ENCODE measurements at regions of chr3 and their contacts with region 1.

Region 1: DNA sequence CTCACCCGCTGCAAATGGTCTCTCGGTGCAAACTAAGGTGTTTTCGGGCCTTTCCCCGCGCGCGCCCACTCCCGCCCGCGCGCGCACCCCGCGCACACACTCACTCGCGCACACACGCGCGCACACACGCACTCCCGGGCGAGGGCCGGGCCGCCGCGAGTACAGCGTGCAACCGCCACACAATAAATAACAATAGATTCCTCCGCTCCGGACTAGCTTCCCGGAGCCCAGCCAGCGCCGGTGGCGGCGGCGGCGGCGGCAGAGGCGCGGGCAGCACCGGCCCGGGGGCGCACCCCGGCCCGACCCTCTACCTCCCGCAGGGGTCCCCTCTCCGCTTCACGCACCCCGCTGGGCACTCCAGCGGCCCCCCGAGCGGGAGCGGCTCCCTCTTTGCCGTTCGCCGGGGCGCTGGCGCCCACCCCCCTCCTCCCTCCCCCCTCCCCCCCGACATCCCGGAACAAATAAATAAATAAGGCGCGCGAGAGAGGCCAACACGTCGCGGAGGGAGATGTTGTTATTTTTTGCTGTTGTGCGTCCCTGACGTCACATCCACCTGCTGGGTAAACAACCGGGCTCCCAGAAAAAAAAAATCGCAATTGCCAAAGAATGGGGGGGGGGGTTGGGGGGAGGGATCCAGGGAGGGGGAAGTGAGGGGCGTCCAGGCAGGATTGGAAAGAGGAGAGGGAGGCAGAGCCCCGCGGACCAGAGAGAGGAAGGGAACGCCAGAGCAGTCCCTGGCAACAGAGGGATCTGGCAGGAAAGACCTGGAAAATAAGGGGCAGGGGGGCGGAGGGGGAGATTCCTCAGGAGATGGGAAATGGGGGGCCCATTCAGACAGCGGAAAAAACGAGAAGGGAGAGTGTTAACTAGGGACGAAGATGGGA is at the start of gene FOXP1:
- DNase-seq: peak; percentile 56 to 96 (median 72)

Region 2: DNA sequence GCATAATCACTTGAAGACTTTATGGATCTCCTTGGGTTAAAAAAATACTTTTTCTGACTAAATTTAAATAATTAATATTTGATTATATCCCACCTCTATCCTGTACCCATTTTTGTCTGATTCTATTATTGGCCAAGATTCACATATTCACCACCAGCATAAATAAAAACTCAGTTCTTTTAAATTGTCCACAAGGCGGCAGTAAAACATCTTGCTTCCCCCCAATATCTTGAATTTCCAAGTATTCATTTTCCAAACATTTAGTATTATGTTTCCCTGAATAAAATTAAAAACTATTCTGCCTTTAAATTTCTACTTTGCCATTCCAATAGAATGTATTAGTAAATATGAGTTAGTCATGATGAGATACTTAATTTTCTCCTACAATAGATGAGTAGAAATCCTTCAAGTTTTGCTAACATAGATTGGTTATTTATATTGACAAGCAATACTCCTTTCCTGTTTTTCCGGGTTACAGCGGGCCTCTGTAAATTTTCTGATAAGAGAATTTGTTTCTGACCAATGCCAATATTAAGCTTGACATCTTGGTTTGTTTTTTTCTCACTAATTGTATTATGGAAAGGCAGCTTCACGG is 1052.6 kb before region 1 on chr3:
- intact Hi-C with region 1: loop called (anchors 5 kb)
- DNase-seq: no peak

Region 3: GRCh38 chr3:71064288-71064955 is 519.4 kb before region 1 on chr3:
- intact Hi-C with region 1: loop called (anchors 5 kb)
- DNase-seq: peak in 5 of 10 donors; percentile 28 to 83 (median 66)

Region 4: DNA sequence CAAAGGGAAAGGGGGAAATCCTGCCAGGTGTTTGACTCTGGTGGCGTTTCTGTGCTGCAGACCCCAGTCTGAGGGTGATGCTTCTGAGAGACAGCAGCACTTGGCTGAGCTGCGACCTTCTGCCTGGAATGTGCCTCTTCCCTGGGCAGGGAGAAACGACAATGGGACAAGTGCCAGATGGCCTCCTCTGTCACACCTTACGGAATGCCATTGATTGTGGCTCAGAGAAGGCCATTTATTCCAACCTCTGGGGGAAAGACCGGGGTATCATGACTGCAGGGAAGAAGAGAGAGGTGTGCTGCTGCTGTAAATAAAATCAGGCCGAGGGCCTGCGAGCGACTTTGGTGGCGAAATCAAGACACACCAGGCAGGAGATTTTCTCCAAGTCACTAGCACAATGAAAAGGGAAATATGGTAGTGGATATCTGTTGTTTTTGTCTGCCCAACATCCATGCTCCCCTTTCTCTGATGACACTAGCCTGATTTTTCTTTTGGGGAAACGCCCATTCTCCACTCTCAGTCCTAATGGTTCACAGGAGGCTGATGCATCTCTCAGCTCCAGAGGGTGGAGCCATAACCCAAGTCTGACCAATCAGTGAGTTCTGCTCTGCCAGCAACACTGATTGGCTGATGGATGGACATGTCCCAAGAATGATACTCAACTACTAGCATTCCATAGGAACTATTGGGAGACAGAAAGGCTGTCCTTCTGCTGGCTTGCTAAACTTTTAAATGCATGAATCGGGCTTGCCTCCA is 336.4 kb before region 1 on chr3:
- intact Hi-C with region 1: loop called (anchors 5 kb)
- DNase-seq: peak in 2 of 10 donors; percentile 27 to 81

Region 5: GRCh38 chr3:71360764-71361163 is 223.0 kb before region 1 on chr3:
- intact Hi-C with region 1: no loop called
- DNase-seq: no peak

Region 6: DNA sequence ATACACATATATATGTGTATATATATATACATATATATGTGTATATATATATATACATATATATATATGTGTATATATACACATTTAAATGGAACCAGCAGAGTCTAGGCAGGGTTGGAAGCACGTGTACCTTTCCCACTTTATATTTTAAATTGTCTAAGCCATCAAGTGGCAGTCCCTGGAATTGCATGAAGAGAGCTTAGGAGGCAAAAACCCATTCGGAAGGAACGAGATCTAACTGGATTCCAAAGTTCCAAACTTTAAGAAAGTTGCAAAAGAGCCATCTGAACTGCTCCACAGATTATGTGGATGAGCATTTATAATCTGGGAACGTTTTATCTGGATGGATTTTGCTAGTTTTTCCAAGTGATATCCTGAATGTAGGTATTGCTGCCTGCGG is 186.8 kb before region 1 on chr3:
- intact Hi-C with region 1: no loop called
- DNase-seq: no peak

Region 7: DNA sequence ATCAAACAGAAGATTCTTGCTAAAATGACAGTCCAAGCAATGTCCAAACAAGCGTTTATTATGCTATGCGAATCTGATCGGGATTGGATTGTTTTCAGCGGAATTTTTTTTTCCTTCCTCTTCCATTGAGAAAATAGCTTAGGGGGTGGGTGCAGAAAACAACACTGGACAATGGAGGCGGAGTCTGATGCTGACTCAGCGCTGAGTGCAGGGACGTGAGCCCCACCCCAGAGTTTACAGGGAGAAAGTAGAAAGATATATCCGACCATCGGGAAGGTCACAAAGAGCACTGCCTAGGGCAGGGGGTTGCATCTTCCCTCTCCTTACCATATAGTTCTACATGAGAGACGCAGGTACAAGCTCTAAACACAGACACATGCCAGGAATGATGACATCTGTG is 117.3 kb before region 1 on chr3:
- intact Hi-C with region 1: loop called (anchors 10 kb)
- DNase-seq: peak in 3 of 10 donors; percentile 42 to 84 (median 50)

Region 8: GRCh38 chr3:71652781-71653413 is 69.1 kb after region 1 on chr3:
- intact Hi-C with region 1: loop called (anchors 5 kb)
- DNase-seq: peak in 6 of 10 donors; percentile 21 to 86 (median 48)